Motor neuron (in vitro differentiated cells): ENCODE measurements at regions of chr1 and their contacts with region 1.

Region 1: GRCh38 chr1:13828454-13829151 is 128.6 kb downstream of the PRDM2 start:
- ATAC-seq: peak in 5 of 8 experiments; percentile 13 to 77 (median 48)
- H3K4me3 ChIP-seq: no peak overlapping the region
- H3K27ac ChIP-seq: no peak overlapping the region
- H3K4me1 ChIP-seq: peaks cover 0 to 3% of the 10 kb centered on the region in 2 donors

Region 2: DNA sequence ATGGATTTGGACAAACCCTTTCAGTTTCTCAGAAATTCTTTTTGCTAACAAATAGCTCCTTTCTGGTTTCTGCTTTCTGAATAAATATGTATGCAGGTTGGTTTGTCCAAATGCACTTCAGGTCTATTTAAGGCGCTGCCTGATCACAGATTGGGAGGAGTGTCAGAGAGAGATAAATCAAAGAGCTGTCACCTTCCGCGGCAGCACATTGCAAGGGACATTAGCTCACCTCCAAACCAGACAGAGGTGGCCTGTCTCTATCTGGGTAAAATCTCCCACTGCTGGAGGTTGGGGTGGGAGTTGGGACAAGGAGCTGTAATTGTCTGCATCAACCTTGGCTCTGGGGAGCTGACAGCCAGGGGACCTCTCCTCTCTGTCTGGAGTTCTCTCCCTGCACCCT is 393.1 kb before region 1 on chr1:
- in situ Hi-C with region 1: no loop called
- ATAC-seq: peak in 5 of 8 experiments; percentile 59 to 98 (median 97)
- H3K4me3 ChIP-seq: no peak overlapping the region
- H3K27ac ChIP-seq: peak overlapping the region in 1 of 2 donors; percentile 13
- H3K4me1 ChIP-seq: peaks cover 4 to 10% of the 10 kb centered on the region in 2 donors

Region 3: GRCh38 chr1:13950637-13951036 is 122.0 kb after region 1 on chr1:
- in situ Hi-C with region 1: loop called in 2 of 9 experiments (anchors 5 to 10 kb)
- ATAC-seq: no peak
- H3K4me3 ChIP-seq: no peak overlapping the region
- H3K27ac ChIP-seq: no peak overlapping the region
- H3K4me1 ChIP-seq: no peaks in the 10 kb centered on the region

Region 4: GRCh38 chr1:14017531-14017961 is 188.9 kb after region 1 on chr1:
- in situ Hi-C with region 1: no loop called
- ATAC-seq: peak in 6 of 8 experiments; percentile 57 to 98 (median 96)
- H3K4me3 ChIP-seq: no peak overlapping the region
- H3K27ac ChIP-seq: peak overlapping the region; percentile 2 to 23
- H3K4me1 ChIP-seq: peaks cover 25 to 28% of the 10 kb centered on the region in 2 donors

Region 5: GRCh38 chr1:14259191-14259757 is 430.7 kb after region 1 on chr1:
- in situ Hi-C with region 1: no loop called
- ATAC-seq: peak in 1 of 8 experiments; percentile 23
- H3K4me3 ChIP-seq: no peak overlapping the region
- H3K27ac ChIP-seq: no peak overlapping the region
- H3K4me1 ChIP-seq: peaks cover 32 to 45% of the 10 kb centered on the region in 2 donors